Heart right ventricle (tissue), 16 donors: ENCODE measurements at regions of chr12 and their contacts with region 1.

Region 1: DNA sequence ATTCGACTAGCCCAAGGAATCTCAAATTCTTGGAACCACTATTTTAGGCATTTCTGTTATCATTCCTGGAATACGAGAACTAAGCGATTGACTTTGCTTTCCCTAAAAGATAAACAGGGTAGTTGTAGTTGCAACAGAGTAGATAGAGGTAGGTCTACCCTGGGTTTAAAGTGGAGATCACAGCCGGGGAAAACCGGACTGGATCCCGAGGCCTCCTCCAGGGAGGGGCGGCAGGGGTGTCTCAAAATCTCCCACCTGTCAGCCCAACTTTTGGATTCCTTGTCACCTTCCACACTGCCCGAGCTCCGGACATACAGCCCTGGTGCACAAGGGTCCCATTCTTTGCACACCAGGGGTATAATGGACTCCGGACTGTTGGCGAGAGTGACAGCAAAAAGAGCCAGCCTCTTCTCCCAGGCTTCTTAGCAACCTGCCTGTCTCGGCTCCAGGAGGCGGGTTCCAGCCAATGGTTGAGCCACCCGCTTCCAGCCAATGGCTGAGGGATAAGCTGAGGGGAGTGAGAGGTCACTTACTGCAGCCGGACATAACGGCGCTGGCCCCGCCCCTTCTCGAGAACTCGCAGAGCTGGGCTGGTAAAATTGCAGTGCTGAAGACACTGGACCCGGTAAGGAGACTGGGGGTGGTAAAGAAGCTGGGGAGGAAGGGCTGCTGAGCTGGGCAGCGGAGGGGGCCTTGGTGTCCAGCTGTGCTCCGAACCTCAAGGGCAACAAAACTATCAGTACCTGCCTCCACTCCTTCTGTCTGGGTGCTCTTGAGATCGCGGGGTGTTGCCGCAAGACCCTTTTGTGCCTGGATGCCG is at the start of gene SUOX:
- DNase-seq: peak; percentile 94 to 97
- ATAC-seq: peak; percentile 98 to 100 (median 99)
- H3K4me3 ChIP-seq: peak within 1 kb of the TSS; percentile 19 to 79 (median 66)
- H3K27ac ChIP-seq: peak within 1 kb of the TSS in 9 of 10 donors; percentile 62 to 93 (median 83)
- H3K4me1 ChIP-seq: peaks cover 5 to 22% (median 11%) of the 10 kb centered on the region in 9 donors
- H3K27me3 ChIP-seq: no peaks in the 10 kb centered on the region
- CTCF ChIP-seq: no peak
- total RNA-seq, gene SUOX: 28.2 to 44.8 (median 31.4) TPM

Region 2: GRCh38 chr12:55862286-55862685 is 134.6 kb before region 1 on chr12:
- intact Hi-C with region 1: no loop called
- DNase-seq: no peak
- ATAC-seq: no peak
- H3K4me3 ChIP-seq: no peak overlapping the region
- H3K27ac ChIP-seq: no peak overlapping the region
- H3K4me1 ChIP-seq: no peaks in the 10 kb centered on the region
- H3K27me3 ChIP-seq: no peaks in the 10 kb centered on the region
- CTCF ChIP-seq: no peak

Region 3: DNA sequence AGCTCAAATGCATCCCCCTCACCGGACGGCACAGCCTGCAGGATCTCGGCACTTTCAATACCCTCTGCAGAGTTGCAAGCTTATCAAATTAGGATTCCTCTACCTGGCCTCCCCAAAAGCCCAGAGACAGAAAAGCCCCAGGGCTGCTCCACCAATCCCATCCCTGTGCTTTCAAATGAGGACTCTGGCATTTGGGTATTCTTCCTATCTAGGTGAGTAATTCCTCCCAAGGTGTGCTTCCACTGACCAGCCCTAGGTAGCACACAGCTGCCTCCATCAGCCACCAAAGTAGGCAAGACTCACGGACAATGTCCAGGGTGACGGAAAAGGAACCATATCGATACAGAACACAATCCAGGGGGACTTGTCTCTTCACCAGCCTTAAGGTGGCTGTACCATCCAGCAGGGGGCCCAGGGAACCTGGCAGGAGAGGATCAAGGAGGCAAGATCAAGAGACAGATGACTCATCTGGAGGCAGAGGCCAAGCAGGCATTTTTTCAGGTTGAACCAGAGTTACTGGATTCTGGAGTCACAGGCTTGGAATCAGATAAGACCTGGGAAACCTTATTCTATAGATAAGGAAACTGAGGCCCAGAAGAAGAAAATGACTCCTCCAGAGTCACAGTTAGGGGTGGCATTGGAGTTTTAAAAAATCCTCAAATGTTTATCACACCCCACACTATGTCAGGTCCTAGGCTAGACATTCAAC is 41.0 kb before region 1 on chr12:
- intact Hi-C with region 1: no loop called
- DNase-seq: no peak
- ATAC-seq: no peak
- H3K4me3 ChIP-seq: no peak overlapping the region
- H3K27ac ChIP-seq: no peak overlapping the region
- H3K4me1 ChIP-seq: no peaks in the 10 kb centered on the region
- H3K27me3 ChIP-seq: no peaks in the 10 kb centered on the region
- CTCF ChIP-seq: peak in 1 of 9 donors; percentile 8

Region 4: GRCh38 chr12:56029666-56030293 is 32.9 kb after region 1 on chr12:
- intact Hi-C with region 1: loop called in 3 of 10 experiments (anchors 2 to 5 kb)
- DNase-seq: peak in 1 of 2 donors; percentile 28
- ATAC-seq: peak in 5 of 8 donors; percentile 37 to 70 (median 43)
- H3K4me3 ChIP-seq: no peak overlapping the region
- H3K27ac ChIP-seq: no peak overlapping the region
- H3K4me1 ChIP-seq: peaks cover 0 to 9% (median 0%) of the 10 kb centered on the region in 9 donors
- H3K27me3 ChIP-seq: no peaks in the 10 kb centered on the region
- CTCF ChIP-seq: peak in 8 of 9 donors; percentile 37 to 66 (median 58)

Region 5: GRCh38 chr12:56041552-56042429 is 44.9 kb after region 1 on chr12 and contains the start of gene RPS26:
- intact Hi-C with region 1: loop called in 5 of 10 experiments (anchors 1 to 5 kb)
- DNase-seq: peak; percentile 94 to 98
- ATAC-seq: peak; percentile 95 to 99 (median 97)
- H3K4me3 ChIP-seq: peak within 1 kb of the TSS; percentile 57 to 96 (median 80)
- H3K27ac ChIP-seq: peak within 1 kb of the TSS; percentile 92 to 99 (median 97)
- H3K4me1 ChIP-seq: peaks cover 0 to 23% (median 18%) of the 10 kb centered on the region in 9 donors
- H3K27me3 ChIP-seq: no peaks in the 10 kb centered on the region
- CTCF ChIP-seq: peak in 8 of 9 donors; percentile 34 to 69 (median 54)
- total RNA-seq, gene RPS26: 6.9 to 39.6 (median 19.3) TPM

Region 6: DNA sequence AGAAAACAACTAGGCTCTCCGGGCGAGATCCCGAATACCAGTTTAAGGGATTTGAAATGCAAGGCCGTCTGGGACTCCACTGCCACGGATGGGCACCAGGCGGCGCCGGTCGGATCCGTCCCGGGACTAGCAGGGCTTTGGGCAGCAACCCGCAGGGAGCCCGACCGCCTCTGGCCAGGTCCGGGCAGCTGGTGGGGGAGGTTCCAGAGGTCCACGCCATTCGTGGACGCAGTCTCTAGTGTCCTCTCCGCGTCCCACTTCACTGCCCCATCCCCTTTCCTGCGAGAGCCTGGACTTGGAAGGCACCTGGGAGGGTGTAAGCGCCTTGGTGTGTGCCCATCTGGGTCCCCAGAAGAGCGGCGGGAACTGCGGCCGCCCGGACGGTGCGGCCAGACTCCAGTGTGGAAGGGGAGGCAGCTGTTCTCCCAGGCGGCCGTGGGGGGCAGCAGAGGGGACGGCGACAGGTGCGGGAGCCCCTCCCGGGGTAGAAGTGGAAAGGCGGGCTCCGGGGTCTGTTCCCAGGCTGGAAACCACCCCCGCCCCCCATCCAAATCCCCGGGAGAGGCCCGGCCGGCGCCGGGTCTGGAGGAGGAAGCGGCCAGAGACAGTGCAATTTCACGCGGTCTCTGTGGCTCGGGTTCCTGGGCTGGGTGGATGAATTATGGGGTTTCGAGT is 82.2 kb after region 1 on chr12:
- intact Hi-C with region 1: no loop called
- DNase-seq: peak; percentile 81 to 86
- ATAC-seq: peak; percentile 83 to 94 (median 89)
- H3K4me3 ChIP-seq: peak overlapping the region; percentile 19 to 70 (median 56)
- H3K27ac ChIP-seq: peak overlapping the region in 9 of 10 donors; percentile 3 to 55 (median 41)
- H3K4me1 ChIP-seq: peaks cover 0 to 23% (median 18%) of the 10 kb centered on the region in 9 donors
- H3K27me3 ChIP-seq: peaks cover 0 to 32% (median 9%) of the 10 kb centered on the region in 7 donors
- CTCF ChIP-seq: peak; percentile 52 to 79 (median 68)